Motor neuron (in vitro differentiated cells): ENCODE measurements at regions of chr9 and their contacts with region 1.

Region 1: DNA sequence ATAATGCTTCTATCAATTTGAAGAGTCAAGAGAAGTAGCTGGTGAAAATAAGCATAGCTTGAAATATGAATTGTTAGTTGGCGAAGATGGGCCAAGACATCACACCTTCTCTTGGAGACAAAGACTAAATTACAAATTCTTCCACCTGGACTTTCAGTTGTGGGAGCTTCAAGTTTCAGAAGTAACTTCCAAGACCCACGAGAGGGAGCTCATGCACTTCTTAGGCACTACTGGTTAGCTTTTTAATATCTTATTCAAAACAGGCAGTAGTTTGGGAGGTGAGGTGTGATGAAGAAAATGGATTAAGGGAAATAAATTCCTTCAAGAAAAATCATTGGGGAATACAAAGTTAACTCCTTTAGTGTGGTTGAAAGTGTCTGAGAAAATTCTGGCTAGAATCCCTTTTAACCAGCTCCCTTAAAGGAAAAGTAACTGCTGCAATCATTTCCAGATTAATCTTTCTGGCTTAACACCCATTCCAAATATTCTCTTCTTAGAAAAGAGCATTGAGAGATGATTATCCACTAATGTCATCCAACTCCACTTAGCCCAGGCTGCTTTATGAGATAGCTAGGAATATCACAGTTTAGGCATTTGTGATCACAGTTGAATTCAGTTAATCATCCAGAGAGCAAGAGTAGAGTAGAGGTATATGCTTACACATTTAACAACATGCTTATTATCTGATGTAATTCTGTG is 139.5 kb upstream of the DMRTA1 start:
- ATAC-seq: peak in 5 of 8 experiments; percentile 23 to 79 (median 60)
- H3K4me3 ChIP-seq: no peak overlapping the region
- H3K27ac ChIP-seq: no peak overlapping the region
- H3K4me1 ChIP-seq: no peaks in the 10 kb centered on the region

Region 2: GRCh38 chr9:22216730-22217160 is 90.4 kb before region 1 on chr9:
- in situ Hi-C with region 1: no loop called
- ATAC-seq: peak in 2 of 8 experiments; percentile 92 to 93
- H3K4me3 ChIP-seq: no peak overlapping the region
- H3K27ac ChIP-seq: no peak overlapping the region
- H3K4me1 ChIP-seq: no peaks in the 10 kb centered on the region

Region 3: DNA sequence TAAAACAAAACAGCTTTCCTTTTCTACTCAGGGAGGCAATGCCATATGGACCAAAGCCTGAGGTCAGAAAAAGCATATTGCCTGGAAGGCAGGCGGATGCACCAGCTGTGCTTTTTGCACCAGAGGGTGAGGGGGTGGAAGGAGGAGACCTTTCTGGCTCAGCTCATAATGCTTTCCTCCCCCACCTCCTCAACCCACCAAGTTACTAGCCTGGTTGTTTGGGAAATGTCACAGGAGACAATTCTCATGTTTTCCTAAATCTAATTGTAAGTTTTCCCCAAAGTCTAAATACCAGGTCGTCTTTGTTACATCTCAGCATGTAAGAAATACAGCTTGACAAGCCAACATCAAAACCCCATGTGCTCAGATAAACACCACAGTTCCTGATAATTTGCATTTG is 66.9 kb after region 1 on chr9:
- in situ Hi-C with region 1: no loop called
- ATAC-seq: no peak
- H3K4me3 ChIP-seq: no peak overlapping the region
- H3K27ac ChIP-seq: no peak overlapping the region
- H3K4me1 ChIP-seq: no peaks in the 10 kb centered on the region

Region 4: GRCh38 chr9:22446950-22447617 is 139.9 kb after region 1 on chr9:
- in situ Hi-C with region 1: loop called in 4 of 9 experiments (anchors 10 to 25 kb)
- ATAC-seq: peak; percentile 82 to 94 (median 90)
- H3K4me3 ChIP-seq: peak overlapping the region; percentile 59 to 73 (median 63)
- H3K27ac ChIP-seq: peak overlapping the region in 1 of 2 donors; percentile 63
- H3K4me1 ChIP-seq: peaks cover 2 to 4% of the 10 kb centered on the region in 2 donors

Region 5: GRCh38 chr9:22452415-22453010 is 145.4 kb after region 1 on chr9:
- in situ Hi-C with region 1: loop called in 4 of 9 experiments (anchors 10 to 25 kb)
- ATAC-seq: peak in 3 of 8 experiments; percentile 41 to 52 (median 47)
- H3K4me3 ChIP-seq: no peak overlapping the region
- H3K27ac ChIP-seq: no peak overlapping the region
- H3K4me1 ChIP-seq: peaks cover 0 to 4% of the 10 kb centered on the region in 2 donors

Region 6: DNA sequence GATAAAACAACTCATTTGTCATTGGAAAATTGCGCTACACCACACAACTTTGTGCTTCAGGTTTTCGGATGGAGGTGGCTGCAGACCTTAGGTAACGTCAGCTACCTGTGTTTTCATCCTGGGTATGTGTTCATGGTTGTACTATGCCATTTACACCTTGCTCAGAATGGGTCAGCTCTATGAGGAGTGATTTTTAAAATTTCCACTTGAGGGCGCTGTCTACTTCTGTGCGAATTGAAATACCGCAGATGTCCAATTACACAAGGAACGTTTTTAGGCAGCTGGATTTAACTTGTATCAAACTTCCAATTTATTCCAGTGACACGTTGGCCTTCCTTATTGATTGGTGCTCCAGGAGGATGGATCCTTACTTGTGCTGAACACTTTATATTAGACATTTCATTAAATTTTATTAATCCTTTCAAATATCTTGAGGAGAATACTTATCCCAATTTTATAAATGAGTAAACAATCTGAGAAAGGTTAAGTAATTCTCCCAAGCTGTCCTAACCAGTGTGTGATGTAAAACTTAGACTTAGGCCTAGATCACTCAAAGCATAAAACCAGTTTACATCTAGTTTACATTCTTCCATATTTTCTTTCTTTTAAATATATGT is 162.9 kb after region 1 on chr9:
- in situ Hi-C with region 1: loop called in 1 of 9 experiments (anchors 25 kb)
- ATAC-seq: peak; percentile 70 to 82 (median 76)
- H3K4me3 ChIP-seq: no peak overlapping the region
- H3K27ac ChIP-seq: no peak overlapping the region
- H3K4me1 ChIP-seq: no peaks in the 10 kb centered on the region